AG04449 (cell line): ENCODE measurements at regions of chr6 and their contacts with region 1.

Region 1: GRCh38 chr6:37705239-37706051 is 7.8 kb upstream of the MDGA1 start:
- DNase-seq: no peak
- H3K4me3 ChIP-seq: peak overlapping the region; percentile 51
- CTCF ChIP-seq: peak; percentile 74

Region 2: DNA sequence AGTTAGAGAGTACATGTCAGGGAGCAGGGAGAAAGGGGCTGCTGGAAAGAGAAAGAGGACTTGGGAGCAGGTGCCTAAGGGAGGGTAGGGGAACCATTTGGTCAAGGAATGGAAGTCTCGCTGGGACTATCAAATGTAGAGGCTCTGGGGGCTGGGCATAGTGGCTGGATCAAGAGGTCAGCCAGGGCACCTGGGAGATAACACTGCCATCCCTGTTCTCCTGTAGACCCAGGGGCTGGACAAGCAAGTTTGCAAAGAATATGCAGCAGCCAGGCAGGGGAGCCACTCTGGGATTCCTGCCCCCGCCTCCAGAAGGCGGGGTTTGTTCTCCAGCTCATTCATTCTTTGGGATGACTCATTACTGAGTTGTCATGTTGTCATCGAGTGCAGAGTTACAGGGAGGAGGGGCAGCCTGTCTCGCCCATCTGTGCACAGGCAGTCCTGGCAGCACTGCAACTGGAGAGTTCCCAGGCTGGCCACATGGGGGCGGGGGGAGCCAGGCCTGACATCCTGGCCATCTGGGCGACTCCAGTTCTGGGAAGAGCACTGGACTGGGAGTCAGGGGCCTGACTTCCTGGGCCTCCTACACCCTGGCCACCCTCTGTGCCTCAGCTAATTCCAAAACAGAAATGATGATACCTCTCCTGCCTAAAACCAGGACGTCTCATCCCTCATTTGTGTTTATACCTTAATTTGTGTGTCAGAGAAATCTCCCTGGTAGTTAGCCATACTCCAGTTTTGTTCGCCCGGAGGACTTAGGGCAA is 85.9 kb after region 1 on chr6:
- CTCF ChIA-PET with region 1: interaction called, 10 read pairs
- POLR2A ChIA-PET with region 1: no interaction called
- DNase-seq: peak; percentile 85
- H3K4me3 ChIP-seq: no peak overlapping the region
- CTCF ChIP-seq: peak; percentile 98

Region 3: DNA sequence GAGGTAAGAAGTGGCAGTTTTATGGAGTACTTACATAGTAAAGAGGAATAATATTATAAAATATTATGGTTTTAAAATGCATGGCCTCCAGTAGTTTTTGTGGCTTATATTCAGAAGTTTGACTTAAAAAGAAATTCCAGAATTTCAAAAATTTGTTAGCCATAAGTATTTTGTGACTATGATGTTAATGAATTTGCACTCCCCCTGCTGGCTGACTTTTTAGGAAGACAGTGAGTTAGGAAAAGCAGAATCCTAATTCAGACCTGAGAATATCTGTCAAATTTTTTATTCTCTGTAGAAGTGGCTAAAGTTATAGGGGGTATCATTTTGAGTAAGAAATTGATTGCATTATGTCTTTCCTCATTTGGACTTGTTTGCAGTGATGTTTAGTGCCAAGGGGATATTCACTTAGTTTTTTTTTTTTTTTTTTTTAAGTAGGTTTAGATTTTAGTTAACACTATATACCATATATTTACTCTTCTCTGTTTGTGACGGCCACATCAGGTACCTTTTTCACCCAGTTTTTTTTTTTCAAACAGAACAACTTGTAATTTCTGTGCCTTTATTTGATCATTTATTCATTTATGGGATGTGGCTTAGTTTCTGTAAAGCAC is 154.9 kb after region 1 on chr6:
- CTCF ChIA-PET with region 1: interaction called, 23 read pairs
- POLR2A ChIA-PET with region 1: no interaction called
- DNase-seq: no peak
- H3K4me3 ChIP-seq: no peak overlapping the region
- CTCF ChIP-seq: peak; percentile 48

Region 4: GRCh38 chr6:38020593-38020992 is 315.1 kb after region 1 on chr6:
- CTCF ChIA-PET with region 1: interaction called, 10 read pairs
- POLR2A ChIA-PET with region 1: no interaction called
- DNase-seq: no peak
- H3K4me3 ChIP-seq: no peak overlapping the region
- CTCF ChIP-seq: no peak